A549 (cell line): ENCODE measurements at regions of chr17 and their contacts with region 1.

Region 1: DNA sequence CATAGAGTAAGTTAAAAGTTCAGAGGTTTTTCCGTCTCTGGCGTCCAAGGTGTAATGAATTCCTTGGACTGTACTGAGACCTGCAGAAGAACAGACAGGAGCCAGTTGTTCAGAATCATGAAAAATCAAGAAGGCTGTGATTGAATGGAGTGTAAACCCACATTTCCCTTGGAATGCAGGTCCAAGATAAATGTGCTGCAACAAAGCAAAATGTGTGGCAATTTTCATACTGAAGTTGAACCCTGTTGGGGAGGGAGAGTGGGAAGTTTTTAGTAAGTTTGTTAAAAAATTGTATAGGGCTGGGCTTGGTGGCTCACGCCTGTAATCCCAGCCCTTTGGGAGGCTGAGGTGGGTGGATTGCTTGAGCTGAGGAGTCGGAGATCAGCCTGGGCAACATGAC is 21.4 kb downstream of the GGNBP2 start:
- DNase-seq: no peak
- ATAC-seq: no peak
- H3K4me3 ChIP-seq: no peak overlapping the region
- H3K27ac ChIP-seq: no peak overlapping the region
- H3K4me1 ChIP-seq: no peaks in the 10 kb centered on the region
- CTCF ChIP-seq: no peak
- EP300 ChIP-seq: no peak
- POLR2A ChIP-seq: no peak
- RAD21 ChIP-seq: no peak

Region 2: DNA sequence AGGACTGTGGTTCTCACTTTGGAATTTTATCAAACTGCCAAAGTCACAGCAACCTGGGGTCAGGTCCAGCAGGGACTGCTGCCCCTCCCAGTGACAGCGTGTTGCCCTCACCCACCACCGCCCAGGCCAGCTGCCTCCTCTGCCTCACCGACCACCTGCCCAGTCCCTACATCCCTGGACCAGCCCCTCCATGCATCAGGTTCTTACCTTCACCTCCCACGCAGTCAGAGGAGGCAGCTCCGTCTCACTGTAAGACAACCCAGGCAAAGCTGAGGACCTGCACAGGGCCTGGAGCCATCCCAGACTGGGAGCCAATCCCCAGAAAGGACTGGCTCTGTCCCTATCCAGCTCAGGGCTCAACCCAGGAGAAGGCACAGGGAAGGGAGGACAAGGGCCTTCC is 108.8 kb before region 1 on chr17:
- CTCF ChIA-PET with region 1: no interaction called
- POLR2A ChIA-PET with region 1: no interaction called
- DNase-seq: no peak
- ATAC-seq: no peak
- H3K4me3 ChIP-seq: no peak overlapping the region
- H3K27ac ChIP-seq: no peak overlapping the region
- H3K4me1 ChIP-seq: no peaks in the 10 kb centered on the region
- CTCF ChIP-seq: no peak
- EP300 ChIP-seq: no peak
- POLR2A ChIP-seq: no peak
- RAD21 ChIP-seq: no peak

Region 3: GRCh38 chr17:36550491-36551417 is 15.3 kb before region 1 on chr17:
- CTCF ChIA-PET with region 1: interaction called, 12 read pairs
- POLR2A ChIA-PET with region 1: interaction called, 4 read pairs
- DNase-seq: no peak
- ATAC-seq: no peak
- H3K4me3 ChIP-seq: no peak overlapping the region
- H3K27ac ChIP-seq: no peak overlapping the region
- H3K4me1 ChIP-seq: peaks cover 22% of the 10 kb centered on the region
- CTCF ChIP-seq: no peak
- EP300 ChIP-seq: no peak
- POLR2A ChIP-seq: no peak
- RAD21 ChIP-seq: no peak